ENCODE measurements at regions of chr14 and their contacts with region 1.

Region 1: DNA sequence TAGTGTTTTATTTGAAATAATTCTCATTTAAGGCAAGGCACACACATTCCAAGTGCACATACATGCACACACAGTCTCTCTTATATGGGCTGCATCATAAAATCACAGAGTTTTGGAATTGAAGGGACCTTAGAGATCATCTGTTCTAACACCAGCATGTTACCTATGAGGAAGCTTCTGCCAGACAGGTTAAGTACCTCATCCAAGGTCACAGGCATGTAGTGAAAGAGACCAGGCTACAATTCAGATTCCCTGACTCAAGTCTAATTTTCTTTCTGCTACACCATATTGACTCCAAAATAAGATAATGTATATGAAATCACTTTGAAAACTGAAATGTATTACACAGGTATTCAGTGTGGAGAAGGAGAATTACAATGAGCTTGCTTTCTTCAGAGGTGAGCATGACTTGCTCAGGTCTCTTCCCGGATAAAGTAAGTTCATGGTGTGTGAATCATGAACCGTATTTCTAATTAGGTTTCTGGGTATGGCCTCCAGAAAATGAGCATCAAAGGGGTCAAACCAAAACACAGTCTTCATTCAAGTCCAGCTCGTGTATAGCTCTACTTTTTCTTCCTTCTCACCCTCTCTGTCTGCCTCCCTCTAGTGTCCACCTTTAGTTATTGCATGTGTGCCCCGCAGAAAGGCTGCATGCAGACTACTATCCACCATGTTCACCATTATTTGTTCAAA is 411.9 kb downstream of the FUT8 start:
- DNase-seq: peak; percentile 78
- ATAC-seq: peak; percentile 93
- H3K4me3 Mint-ChIP-seq: no peak overlapping the region
- H3K27ac Mint-ChIP-seq: peak overlapping the region; percentile 75
- H3K4me1 Mint-ChIP-seq: peaks cover 29% of the 10 kb centered on the region
- H3K27me3 Mint-ChIP-seq: no peaks in the 10 kb centered on the region

Region 2: DNA sequence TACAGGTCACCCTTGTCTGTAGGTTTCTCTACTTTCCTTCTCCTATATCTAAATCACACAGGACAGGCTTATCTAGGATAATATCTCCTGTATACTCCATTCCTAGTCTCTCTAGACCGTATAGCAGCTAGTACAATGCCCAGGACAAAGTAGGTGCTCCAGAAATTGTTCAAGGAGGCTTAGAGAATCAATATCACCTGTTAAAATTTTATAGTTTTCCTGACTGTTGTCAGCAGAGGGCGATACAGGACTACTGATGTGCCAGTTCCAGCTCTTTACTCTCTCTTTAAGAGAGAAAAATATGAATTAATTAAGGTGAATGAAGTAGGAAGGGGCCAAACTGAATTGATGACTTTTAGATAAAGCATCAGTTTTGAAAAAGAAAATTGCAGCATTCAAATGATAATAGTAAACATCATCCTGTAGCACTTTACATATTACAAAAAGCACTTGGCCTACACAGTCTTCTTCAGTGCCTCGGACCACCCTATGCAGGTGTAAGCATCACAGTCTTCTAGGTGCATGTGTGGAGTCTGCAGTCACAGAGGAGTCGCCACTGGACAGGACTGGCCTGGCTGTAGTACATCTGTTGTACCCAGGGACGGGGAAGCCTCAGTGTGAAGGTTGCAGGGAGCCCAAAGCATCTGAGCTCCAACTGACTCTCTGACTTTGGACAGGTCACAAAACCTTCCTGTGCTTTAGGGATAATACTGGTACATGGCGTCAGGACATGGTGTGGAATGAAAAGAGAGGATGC is 660.2 kb before region 1 on chr14:
- CTCF ChIA-PET with region 1: interaction called, 42 read pairs
- POLR2A ChIA-PET with region 1: no interaction called
- DNase-seq: peak; percentile 67
- ATAC-seq: peak; percentile 71
- H3K4me3 Mint-ChIP-seq: no peak overlapping the region
- H3K27ac Mint-ChIP-seq: peak overlapping the region; percentile 27
- H3K4me1 Mint-ChIP-seq: peaks cover 29% of the 10 kb centered on the region
- H3K27me3 Mint-ChIP-seq: no peaks in the 10 kb centered on the region

Region 3: GRCh38 chr14:65585216-65585615 is 239.2 kb before region 1 on chr14:
- CTCF ChIA-PET with region 1: no interaction called
- POLR2A ChIA-PET with region 1: no interaction called
- DNase-seq: no peak
- ATAC-seq: no peak
- H3K4me3 Mint-ChIP-seq: no peak overlapping the region
- H3K27ac Mint-ChIP-seq: no peak overlapping the region
- H3K4me1 Mint-ChIP-seq: peaks cover 9% of the 10 kb centered on the region
- H3K27me3 Mint-ChIP-seq: no peaks in the 10 kb centered on the region

Region 4: GRCh38 chr14:65794674-65795279 is 29.7 kb before region 1 on chr14:
- CTCF ChIA-PET with region 1: interaction called, 16 read pairs
- POLR2A ChIA-PET with region 1: no interaction called
- DNase-seq: no peak
- ATAC-seq: no peak
- H3K4me3 Mint-ChIP-seq: no peak overlapping the region
- H3K27ac Mint-ChIP-seq: no peak overlapping the region
- H3K4me1 Mint-ChIP-seq: no peaks in the 10 kb centered on the region
- H3K27me3 Mint-ChIP-seq: peaks cover 16% of the 10 kb centered on the region

Region 5: DNA sequence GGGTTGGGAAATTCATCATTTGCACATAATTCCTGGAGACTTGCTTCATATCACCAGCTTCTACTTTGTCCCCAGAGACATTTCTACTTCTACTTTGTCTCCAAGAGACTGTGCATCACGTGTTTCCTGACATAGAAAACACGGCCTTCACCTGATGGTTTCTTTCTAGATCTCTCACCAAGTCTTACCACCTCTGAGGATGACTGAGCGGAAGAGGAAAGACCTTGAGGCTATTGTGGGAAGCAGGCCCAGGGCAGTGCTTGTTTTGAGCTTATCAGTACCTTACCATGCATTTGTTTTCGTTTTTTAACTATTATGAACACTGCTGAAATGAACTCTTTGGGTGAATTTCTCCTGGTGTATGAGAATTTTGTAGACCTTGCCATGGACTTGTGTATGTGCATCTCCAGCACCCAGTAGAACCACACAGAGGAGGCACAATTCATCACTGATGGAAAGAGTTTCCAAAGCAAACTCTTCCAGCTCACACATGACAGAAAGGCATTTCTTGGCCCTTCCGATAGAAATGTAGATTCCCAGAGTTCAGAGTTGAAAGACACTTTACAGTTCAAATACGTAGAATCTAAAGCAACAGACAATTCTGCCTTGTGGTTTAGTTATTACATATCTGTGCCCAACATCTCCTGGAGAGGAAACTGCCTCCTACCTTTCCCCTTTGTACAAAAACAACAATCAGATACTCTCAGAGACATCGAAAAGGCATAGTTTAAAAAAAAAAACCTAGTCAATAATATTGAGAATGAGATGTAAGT is 22.8 kb after region 1 on chr14:
- CTCF ChIA-PET with region 1: interaction called, 48 read pairs
- POLR2A ChIA-PET with region 1: no interaction called
- DNase-seq: peak; percentile 93
- ATAC-seq: peak; percentile 92
- H3K4me3 Mint-ChIP-seq: peak overlapping the region; percentile 60
- H3K27ac Mint-ChIP-seq: peak overlapping the region; percentile 93
- H3K4me1 Mint-ChIP-seq: peaks cover 83% of the 10 kb centered on the region
- H3K27me3 Mint-ChIP-seq: no peaks in the 10 kb centered on the region

Region 6: DNA sequence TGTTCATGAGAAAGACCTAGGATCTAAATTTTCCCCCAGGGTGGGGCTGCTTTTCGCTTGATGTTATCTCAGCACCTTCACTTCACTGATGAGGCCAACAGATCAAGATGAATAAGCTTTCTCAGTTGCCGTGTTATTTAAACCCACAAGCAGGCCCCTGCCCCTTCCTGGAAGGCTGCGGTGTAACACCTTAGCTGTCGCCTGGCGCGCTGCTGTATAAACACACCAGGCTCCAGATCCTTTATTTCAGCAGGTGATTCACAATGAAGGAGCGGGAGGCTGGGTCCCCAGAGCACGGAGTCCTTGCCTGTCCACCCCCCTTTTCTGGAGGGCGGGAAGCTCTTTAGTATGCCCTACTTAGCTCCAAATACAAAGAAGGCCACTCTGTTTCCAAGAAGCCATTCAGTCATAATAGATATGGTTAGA is 103.5 kb after region 1 on chr14:
- CTCF ChIA-PET with region 1: interaction called, 20 read pairs
- POLR2A ChIA-PET with region 1: interaction called, 3 read pairs
- DNase-seq: peak; percentile 91
- ATAC-seq: peak; percentile 94
- H3K4me3 Mint-ChIP-seq: peak overlapping the region; percentile 55
- H3K27ac Mint-ChIP-seq: peak overlapping the region; percentile 92
- H3K4me1 Mint-ChIP-seq: peaks cover 79% of the 10 kb centered on the region
- H3K27me3 Mint-ChIP-seq: no peaks in the 10 kb centered on the region

Region 7: GRCh38 chr14:65966191-65966590 is 141.8 kb after region 1 on chr14:
- CTCF ChIA-PET with region 1: interaction called, 108 read pairs
- POLR2A ChIA-PET with region 1: no interaction called
- DNase-seq: no peak
- ATAC-seq: peak; percentile 47
- H3K4me3 Mint-ChIP-seq: no peak overlapping the region
- H3K27ac Mint-ChIP-seq: no peak overlapping the region
- H3K4me1 Mint-ChIP-seq: peaks cover 12% of the 10 kb centered on the region
- H3K27me3 Mint-ChIP-seq: peaks cover 34% of the 10 kb centered on the region

Region 8: GRCh38 chr14:66105815-66106214 is 281.4 kb after region 1 on chr14:
- CTCF ChIA-PET with region 1: no interaction called
- POLR2A ChIA-PET with region 1: no interaction called
- DNase-seq: no peak
- ATAC-seq: no peak
- H3K4me3 Mint-ChIP-seq: no peak overlapping the region
- H3K27ac Mint-ChIP-seq: no peak overlapping the region
- H3K4me1 Mint-ChIP-seq: peaks cover 5% of the 10 kb centered on the region
- H3K27me3 Mint-ChIP-seq: peaks cover 11% of the 10 kb centered on the region

Region 9: GRCh38 chr14:66196670-66197069 is 372.2 kb after region 1 on chr14:
- CTCF ChIA-PET with region 1: no interaction called
- POLR2A ChIA-PET with region 1: no interaction called
- DNase-seq: no peak
- ATAC-seq: no peak
- H3K4me3 Mint-ChIP-seq: no peak overlapping the region
- H3K27ac Mint-ChIP-seq: no peak overlapping the region
- H3K4me1 Mint-ChIP-seq: no peaks in the 10 kb centered on the region
- H3K27me3 Mint-ChIP-seq: peaks cover 6% of the 10 kb centered on the region

Measured in activated CD8-positive, alpha-beta T cell treated with anti-CD3 and anti-CD28 coated beads, Interleukin-2, amount 10 ng/mL, durations not matched to agents 7 days and 5 days (primary cell).